ENCODE measurements at regions of chr3 and their contacts with region 1.

Region 1: GRCh38 chr3:53243165-53243564 is 12.7 kb downstream of the TKT start:
- DNase-seq: no peak
- H3K4me3 ChIP-seq: no peak overlapping the region
- H3K27ac ChIP-seq: peak overlapping the region in 1 of 2 experiments; percentile 61
- H3K4me1 ChIP-seq: peaks cover 3 to 40% (median 8%) of the 10 kb centered on the region in 4 experiments
- H3K27me3 ChIP-seq: no peaks in the 10 kb centered on the region

Region 2: DNA sequence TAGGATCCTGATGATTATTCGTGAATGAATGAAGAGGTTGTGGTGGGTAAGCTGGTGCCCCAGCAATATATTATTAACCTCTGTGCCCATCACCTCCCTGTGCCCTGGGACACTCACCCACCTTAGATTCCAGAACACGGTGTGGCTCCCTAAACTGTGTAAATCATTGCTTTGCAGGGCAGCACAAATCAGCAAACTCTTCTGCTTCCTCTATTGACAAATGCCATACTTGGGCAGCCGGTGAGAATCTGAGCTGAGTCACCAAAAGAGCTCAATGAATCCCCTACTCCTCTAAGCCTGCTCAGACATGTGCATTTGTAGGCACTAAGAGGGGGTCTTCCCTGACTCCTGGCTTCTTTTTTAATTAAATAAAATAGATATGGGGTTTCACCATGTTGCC is 691.1 kb before region 1 on chr3:
- CTCF ChIA-PET with region 1: no interaction called
- POLR2A ChIA-PET with region 1: no interaction called
- DNase-seq: no peak
- H3K4me3 ChIP-seq: no peak overlapping the region
- H3K27ac ChIP-seq: no peak overlapping the region
- H3K4me1 ChIP-seq: no peaks in the 10 kb centered on the region
- H3K27me3 ChIP-seq: no peaks in the 10 kb centered on the region

Region 3: GRCh38 chr3:53255775-53256703 is 12.9 kb after region 1 on chr3 and contains the start of gene TKT:
- CTCF ChIA-PET with region 1: interaction called, 10 read pairs
- POLR2A ChIA-PET with region 1: no interaction called
- DNase-seq: peak; percentile 84 to 90 (median 88)
- H3K4me3 ChIP-seq: peak within 1 kb of the TSS; percentile 78 to 96 (median 95)
- H3K27ac ChIP-seq: peak within 1 kb of the TSS; percentile 46 to 73
- H3K4me1 ChIP-seq: peaks cover 16 to 41% (median 37%) of the 10 kb centered on the region in 4 experiments
- H3K27me3 ChIP-seq: no peaks in the 10 kb centered on the region

Region 4: GRCh38 chr3:53382106-53382505 is 138.9 kb after region 1 on chr3:
- CTCF ChIA-PET with region 1: no interaction called
- POLR2A ChIA-PET with region 1: no interaction called
- DNase-seq: no peak
- H3K4me3 ChIP-seq: no peak overlapping the region
- H3K27ac ChIP-seq: no peak overlapping the region
- H3K4me1 ChIP-seq: no peaks in the 10 kb centered on the region
- H3K27me3 ChIP-seq: peaks cover 0 to 2% (median 0%) of the 10 kb centered on the region in 5 experiments

Measured in common myeloid progenitor, CD34-positive (primary cell).